Right ventricle myocardium inferior (tissue), 1 donor: ENCODE measurements at regions of chr6 and their contacts with region 1.

Region 1: GRCh38 chr6:134795691-134796090 is 154.2 kb downstream of the ALDH8A1 start:
- DNase-seq: no peak
- ATAC-seq: no peak

Region 2: GRCh38 chr6:134689641-134690040 is 106.0 kb before region 1 on chr6:
- intact Hi-C with region 1: loop called (anchors 5 kb)
- DNase-seq: peak; percentile 76
- ATAC-seq: peak; percentile 93

Region 3: DNA sequence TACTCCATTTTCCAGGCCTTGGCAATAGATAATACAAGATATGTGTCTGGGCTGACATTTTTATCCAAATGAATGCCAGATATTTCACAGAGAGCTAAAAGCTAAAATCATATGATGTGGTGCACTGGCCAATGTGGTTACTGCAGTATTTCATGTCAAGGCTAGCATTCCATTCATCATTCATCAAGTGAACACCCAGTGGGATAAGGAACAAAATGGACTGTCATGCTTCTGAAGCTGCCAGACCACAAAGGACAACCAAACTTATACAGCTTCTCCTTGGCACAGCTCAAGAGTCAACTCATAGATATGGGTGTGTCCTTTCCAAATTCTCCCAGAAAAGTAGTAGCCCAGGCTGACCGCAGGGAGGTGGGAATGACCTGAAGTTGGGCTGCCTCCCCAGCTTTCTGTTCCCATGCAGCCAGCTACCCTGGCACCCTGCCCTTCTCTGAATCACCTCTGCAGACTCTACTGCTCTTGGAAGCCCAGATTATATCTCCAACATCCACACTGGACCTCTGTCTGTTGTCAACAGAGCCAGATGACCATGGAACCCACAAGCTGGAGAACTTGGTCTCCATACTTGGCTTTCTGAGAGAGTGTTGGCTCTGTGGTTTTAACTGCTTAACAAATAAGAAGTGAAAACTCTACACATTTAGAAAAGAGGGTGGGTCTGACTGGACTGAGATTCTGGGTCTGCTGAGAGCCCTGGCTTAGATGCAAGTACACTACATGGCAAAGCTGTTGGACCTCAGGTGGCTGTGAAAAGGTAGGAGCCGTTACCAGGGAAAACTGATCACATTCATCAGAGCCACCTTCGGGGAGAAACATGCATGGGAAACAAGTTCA is 31.4 kb after region 1 on chr6:
- intact Hi-C with region 1: no loop called
- DNase-seq: peak; percentile 85
- ATAC-seq: peak; percentile 91